ENCODE measurements at regions of chr3 and their contacts with region 1.

Region 1: DNA sequence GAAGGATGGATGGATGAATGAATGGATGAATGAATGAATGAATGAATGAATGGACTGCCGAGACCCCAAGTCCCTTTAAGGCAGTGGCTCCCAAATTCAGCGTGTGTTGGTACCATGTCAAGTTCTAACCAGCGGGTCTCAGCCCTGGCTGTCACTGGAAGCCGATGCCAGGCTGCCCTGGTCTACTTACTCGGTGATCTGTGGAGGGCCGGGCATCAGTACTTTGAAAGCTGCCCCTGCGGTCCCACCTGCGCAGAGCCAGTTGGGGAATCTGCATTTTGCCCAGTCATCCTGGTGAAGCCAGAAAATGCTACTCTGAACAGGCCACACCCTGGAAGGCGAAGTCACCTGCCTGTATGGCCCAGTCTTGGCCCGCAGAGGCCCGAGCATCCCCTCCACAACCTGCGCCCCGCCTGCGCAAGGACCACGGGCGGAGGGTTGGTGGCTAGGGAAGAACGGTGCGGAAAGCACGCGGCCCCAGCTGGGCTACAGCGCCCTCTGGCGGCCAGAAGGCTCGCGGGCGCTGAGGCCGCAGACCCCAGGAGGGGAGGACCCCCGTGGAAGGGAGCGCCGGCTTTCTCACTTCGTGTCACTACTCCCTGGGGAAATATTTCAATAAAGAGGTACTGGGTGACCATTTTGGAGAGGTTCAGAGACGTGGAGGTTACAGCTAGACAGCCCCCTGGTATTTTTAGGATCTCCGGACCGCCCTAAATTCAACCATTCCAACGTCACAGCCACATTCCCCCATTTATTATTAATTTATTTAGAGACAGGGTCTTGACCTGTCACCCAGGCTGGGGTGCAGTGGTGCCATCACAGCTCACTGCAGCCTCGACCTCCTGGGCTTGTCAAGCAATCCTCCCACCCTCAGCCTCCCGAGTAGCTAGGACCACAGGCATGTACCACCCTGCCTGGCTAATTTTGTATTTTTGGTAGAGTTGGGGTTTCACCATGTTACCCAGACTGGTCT is 34.9 kb downstream of the PRKCD start:
- ATAC-seq: peak; percentile 44 to 90 (median 84)
- H3K4me3 ChIP-seq: no peak overlapping the region
- H3K27ac ChIP-seq: no peak overlapping the region
- H3K4me1 ChIP-seq: no peaks in the 10 kb centered on the region

Region 2: DNA sequence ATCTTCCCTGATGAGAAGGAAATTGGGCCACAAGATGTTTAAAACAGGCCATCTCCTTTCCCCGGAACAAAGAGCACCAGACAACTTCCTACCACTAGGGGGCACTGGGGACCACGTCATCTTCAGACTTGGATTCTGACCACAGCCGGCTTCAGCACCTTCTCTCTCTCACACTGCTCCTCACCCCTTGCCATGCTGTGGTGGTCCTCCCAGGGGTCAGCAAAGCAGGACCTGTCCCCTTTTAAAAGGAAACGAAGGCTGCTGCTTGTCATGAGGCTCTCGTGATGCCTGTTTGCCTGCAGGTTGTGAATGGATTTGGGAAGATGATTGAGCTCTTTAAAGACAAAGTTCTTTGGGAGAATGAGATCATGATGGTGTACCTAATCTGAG is 81.9 kb before region 1 on chr3:
- in situ Hi-C with region 1: loop called in 2 of 9 experiments (anchors 10 kb)
- ATAC-seq: peak; percentile 80 to 97 (median 90)
- H3K4me3 ChIP-seq: no peak overlapping the region
- H3K27ac ChIP-seq: no peak overlapping the region
- H3K4me1 ChIP-seq: peaks cover 0 to 2% of the 10 kb centered on the region in 2 donors

Region 3: GRCh38 chr3:53130179-53131061 is 65.5 kb before region 1 on chr3 and contains the start of gene RFT1:
- in situ Hi-C with region 1: loop called in 1 of 9 experiments (anchors 10 kb)
- ATAC-seq: peak; percentile 91 to 96 (median 94)
- H3K4me3 ChIP-seq: peak within 1 kb of the TSS; percentile 80 to 93 (median 86)
- H3K27ac ChIP-seq: peak within 1 kb of the TSS; percentile 76 to 88
- H3K4me1 ChIP-seq: peaks cover 11% of the 10 kb centered on the region in 2 donors
- total RNA-seq, gene RFT1: 6.7 to 26.6 (median 10.0) TPM

Region 4: GRCh38 chr3:53493963-53494791 is 298.3 kb after region 1 on chr3 and contains the start of gene CACNA1D:
- in situ Hi-C with region 1: no loop called
- ATAC-seq: peak; percentile 41 to 82 (median 52)
- H3K4me3 ChIP-seq: peak within 1 kb of the TSS; percentile 59 to 92 (median 64)
- H3K27ac ChIP-seq: no peak within 1 kb of the TSS
- H3K4me1 ChIP-seq: peaks cover 24 to 31% of the 10 kb centered on the region in 2 donors
- total RNA-seq, gene CACNA1D: 1.2 to 15.3 (median 5.9) TPM

Measured in motor neuron (in vitro differentiated cells).